ENCODE measurements at regions of chr21 and their contacts with region 1.

Region 1: DNA sequence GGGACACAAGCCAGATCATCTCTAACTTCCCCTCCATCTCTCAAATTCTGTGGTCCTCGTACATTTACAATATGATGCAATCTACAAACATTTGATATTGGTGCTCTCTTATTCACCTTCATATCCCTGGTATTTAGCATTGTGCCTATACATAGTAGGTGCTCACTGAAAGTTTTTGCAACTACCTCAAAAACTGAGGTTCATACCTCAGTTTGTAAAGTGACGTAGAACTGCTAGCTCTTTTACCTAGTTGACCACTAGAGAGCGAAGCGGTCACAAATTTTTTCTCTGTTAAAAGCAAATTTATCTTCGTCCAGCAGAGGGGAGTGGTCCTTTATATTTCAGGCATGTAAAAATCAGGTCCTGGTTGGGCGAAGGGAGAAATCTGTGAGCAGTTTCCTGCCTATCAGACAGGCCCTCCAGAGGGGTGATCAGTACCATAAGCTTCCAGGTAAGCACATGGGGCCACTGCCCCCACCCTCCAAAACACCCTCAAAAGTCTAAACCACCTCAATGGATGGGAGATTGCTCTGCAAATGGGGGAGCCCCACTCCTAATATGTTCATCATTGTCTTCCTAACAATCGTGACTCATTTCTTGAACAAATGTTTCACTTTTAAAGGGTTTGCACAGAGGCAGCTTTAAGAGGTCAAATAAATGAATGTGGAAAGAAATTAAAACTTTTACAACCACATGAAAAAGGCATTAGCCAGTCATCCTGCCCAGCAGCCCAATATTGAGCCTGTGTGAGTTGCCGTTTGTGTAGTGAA is 10.6 kb upstream of the HLCS start:
- DNase-seq: peak; percentile 84
- H3K4me3 ChIP-seq: peak overlapping the region; percentile 50
- H3K27ac ChIP-seq: no peak overlapping the region
- H3K4me1 ChIP-seq: peaks cover 8% of the 10 kb centered on the region
- H3K27me3 ChIP-seq: no peaks in the 10 kb centered on the region

Region 2: DNA sequence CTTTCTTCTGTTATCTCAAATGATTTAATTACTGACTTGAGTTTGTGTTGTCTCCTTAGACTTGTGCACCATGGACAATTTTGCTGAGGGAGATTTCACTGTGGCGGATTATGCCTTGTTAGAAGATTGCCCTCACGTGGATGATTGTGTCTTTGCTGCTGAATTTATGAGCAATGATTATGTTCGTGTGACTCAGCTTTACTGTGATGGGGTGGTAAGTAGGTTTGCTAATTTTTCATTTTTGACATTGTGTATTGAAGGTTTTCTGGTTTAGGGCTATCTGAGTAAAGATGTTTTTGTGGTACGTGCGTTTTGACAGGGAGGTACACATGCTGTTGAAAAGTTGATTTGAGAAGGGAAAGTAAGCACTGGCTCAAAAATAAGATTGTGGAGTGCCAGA is 110.1 kb after region 1 on chr21:
- in situ Hi-C with region 1: loop called (anchors 10 kb)
- DNase-seq: peak; percentile 81
- H3K4me3 ChIP-seq: no peak overlapping the region
- H3K27ac ChIP-seq: peak overlapping the region; percentile 23
- H3K4me1 ChIP-seq: peaks cover 10% of the 10 kb centered on the region
- H3K27me3 ChIP-seq: no peaks in the 10 kb centered on the region